A549 (cell line): ENCODE measurements at regions of chr15 and their contacts with region 1.

Region 1: DNA sequence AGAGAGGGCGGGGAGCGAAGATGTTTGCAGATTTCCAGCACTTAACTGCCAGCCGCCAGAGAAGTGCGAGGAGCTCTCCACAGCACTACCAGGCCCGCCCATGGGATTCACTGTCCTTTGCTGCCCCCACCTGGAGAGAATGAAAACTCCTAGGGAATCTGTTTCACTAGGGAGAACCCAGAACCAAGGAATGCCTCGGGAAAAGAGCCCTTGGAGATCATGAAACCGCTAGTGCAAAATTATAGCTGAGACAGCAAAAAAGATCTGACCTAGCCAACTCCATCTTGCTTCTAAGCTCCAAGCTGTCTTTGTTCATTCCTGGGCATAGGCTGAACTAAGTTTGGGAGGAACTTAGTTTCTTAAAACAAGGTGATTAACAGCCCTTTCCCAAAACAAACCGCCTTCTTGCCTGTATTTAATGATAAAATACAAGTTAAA is 82.6 kb upstream of the GCNT3 start:
- DNase-seq: peak; percentile 74 to 93
- ATAC-seq: peak; percentile 95 to 99
- H3K4me3 ChIP-seq: no peak overlapping the region
- H3K27ac ChIP-seq: no peak overlapping the region
- H3K4me1 ChIP-seq: peaks cover 10% of the 10 kb centered on the region; the same call in 1 of the 3 replicates
- CTCF ChIP-seq: peak; percentile 97
- EP300 ChIP-seq: no peak
- POLR2A ChIP-seq: no peak
- RAD21 ChIP-seq: peak; percentile 99

Region 2: DNA sequence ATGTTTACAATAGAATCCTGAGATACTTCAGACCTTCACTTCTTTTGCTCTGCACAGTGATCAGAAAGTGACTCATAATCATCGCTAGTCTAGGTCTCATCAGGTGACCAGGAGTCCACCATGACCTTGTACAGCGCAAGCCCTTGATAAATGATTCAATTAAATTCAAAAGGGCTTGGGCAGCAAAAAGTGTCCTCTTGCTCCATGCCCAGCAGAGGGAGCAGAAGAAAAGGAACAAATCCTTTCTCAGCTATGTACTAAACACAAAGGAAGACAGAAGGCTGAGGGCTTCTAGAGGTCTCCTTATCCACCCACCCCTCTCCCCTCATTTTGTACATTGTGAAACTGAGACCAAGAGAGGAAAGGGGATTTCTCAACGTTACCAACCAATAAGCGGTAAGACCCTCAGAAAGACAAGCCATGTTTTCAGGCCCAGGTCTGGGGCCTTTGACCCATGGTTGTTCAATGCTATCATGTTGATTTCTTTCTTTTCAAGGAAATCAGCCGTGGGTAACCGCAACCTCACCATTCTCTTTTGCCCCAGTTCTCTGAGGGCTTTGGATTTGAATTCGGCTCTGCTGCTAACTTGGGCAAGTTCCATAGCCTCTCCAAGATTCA is 1316.0 kb before region 1 on chr15:
- CTCF ChIA-PET with region 1: interaction called, 19 read pairs
- POLR2A ChIA-PET with region 1: no interaction called
- DNase-seq: peak; percentile 69 to 76
- ATAC-seq: peak; percentile 94 to 97
- H3K4me3 ChIP-seq: no peak overlapping the region
- H3K27ac ChIP-seq: no peak overlapping the region
- H3K4me1 ChIP-seq: no peaks in the 10 kb centered on the region
- CTCF ChIP-seq: peak; percentile 82
- EP300 ChIP-seq: no peak
- POLR2A ChIP-seq: no peak
- RAD21 ChIP-seq: peak; percentile 67 to 71

Region 3: GRCh38 chr15:58957101-58957973 is 571.6 kb before region 1 on chr15:
- CTCF ChIA-PET with region 1: interaction called, 20 read pairs
- POLR2A ChIA-PET with region 1: no interaction called
- DNase-seq: peak; percentile 85 to 88
- ATAC-seq: peak; percentile 97 to 99
- H3K4me3 ChIP-seq: no peak overlapping the region
- H3K27ac ChIP-seq: no peak overlapping the region
- H3K4me1 ChIP-seq: peaks cover 12% of the 10 kb centered on the region; the same call in 2 of the 3 replicates
- CTCF ChIP-seq: peak; percentile 93
- EP300 ChIP-seq: no peak
- POLR2A ChIP-seq: no peak
- RAD21 ChIP-seq: peak; percentile 79 to 82

Region 4: DNA sequence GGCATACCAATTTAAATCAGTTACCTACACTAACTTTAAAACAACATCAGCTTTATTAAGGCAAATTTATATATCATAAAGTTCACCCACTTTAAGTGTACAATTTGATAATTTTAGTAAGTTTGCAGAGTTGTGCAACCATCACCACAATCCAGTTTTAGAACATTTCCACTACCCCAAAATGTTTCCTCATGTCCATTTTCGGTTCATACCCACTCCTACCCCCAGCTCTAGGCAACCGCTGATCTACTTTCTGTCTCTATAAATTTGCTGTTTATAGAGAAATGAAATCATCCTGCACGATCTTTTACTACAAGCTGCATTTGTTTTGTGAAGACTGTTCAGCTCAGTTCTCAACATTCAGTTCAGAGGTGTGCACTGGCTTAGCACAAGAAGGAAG is 122.5 kb before region 1 on chr15:
- CTCF ChIA-PET with region 1: no interaction called
- POLR2A ChIA-PET with region 1: no interaction called
- DNase-seq: no peak
- ATAC-seq: no peak
- H3K4me3 ChIP-seq: no peak overlapping the region
- H3K27ac ChIP-seq: no peak overlapping the region
- H3K4me1 ChIP-seq: peaks cover 27% of the 10 kb centered on the region
- CTCF ChIP-seq: no peak
- EP300 ChIP-seq: no peak
- POLR2A ChIP-seq: no peak
- RAD21 ChIP-seq: no peak

Region 5: GRCh38 chr15:59492389-59493377 is 36.3 kb before region 1 on chr15:
- CTCF ChIA-PET with region 1: interaction called, 18 read pairs
- POLR2A ChIA-PET with region 1: no interaction called
- DNase-seq: peak; percentile 61 to 81
- ATAC-seq: peak; percentile 95 to 98
- H3K4me3 ChIP-seq: no peak overlapping the region
- H3K27ac ChIP-seq: peak overlapping the region; percentile 55 to 71
- H3K4me1 ChIP-seq: peaks cover 9% of the 10 kb centered on the region
- CTCF ChIP-seq: peak; percentile 98
- EP300 ChIP-seq: no peak
- POLR2A ChIP-seq: no peak
- RAD21 ChIP-seq: peak; percentile 100

Region 6: GRCh38 chr15:59543721-59544547 is 14.9 kb after region 1 on chr15:
- CTCF ChIA-PET with region 1: interaction called, 312 read pairs
- POLR2A ChIA-PET with region 1: no interaction called
- DNase-seq: no peak
- ATAC-seq: no peak; a peak in 2 of 6 replicates
- H3K4me3 ChIP-seq: no peak overlapping the region
- H3K27ac ChIP-seq: peak overlapping the region; percentile 10 to 65; a peak in 4 of 6 replicates
- H3K4me1 ChIP-seq: peaks cover 15% of the 10 kb centered on the region
- CTCF ChIP-seq: no peak
- EP300 ChIP-seq: no peak
- POLR2A ChIP-seq: no peak
- RAD21 ChIP-seq: no peak

Region 7: DNA sequence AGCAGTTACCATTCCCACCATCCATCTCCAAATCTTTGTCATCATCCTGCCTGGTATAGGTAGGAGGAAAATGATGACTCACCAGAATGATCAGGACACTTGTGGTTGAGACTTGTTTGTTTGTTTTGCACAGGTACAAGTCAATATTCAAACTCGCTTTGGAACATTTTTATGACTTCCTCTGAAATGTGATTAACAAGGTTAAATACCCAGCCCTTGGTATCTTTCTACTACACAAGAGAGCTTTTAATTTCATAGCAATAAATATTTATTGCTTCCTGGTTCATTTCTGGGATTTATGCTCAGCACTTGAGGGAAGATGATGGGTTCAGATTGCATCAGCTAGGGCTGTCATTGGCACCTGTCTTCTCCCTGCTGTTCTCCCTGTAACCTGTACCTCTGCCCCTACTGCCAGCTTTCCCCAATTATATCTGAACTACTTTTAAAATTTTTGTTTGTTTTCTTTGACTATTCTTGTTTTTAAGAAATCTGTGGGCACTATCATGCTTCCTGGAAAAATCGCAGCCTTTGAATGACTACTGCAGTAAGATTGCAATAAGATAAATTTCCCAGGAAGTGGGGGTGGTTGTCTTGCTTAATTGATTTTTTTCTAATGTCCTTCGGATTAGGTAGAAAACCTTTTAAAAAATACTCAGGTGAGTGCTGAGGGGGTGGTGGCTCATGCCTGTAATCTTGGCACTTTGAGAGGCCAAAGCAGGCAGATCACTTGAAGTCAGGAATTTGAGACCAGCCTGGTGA is 58.3 kb after region 1 on chr15:
- CTCF ChIA-PET with region 1: interaction called, 60 read pairs
- POLR2A ChIA-PET with region 1: no interaction called
- DNase-seq: peak in 1 of 2 experiments; percentile 62
- ATAC-seq: peak in 1 of 2 experiments; percentile 60; a peak in 3 of 6 replicates
- H3K4me3 ChIP-seq: no peak overlapping the region
- H3K27ac ChIP-seq: peak overlapping the region; percentile 57 to 66
- H3K4me1 ChIP-seq: peaks cover 15% of the 10 kb centered on the region
- CTCF ChIP-seq: no peak
- EP300 ChIP-seq: no peak
- POLR2A ChIP-seq: no peak
- RAD21 ChIP-seq: no peak

Region 8: GRCh38 chr15:59611276-59612260 is 82.6 kb after region 1 on chr15 and contains the start of gene GCNT3:
- CTCF ChIA-PET with region 1: interaction called, 154 read pairs
- POLR2A ChIA-PET with region 1: interaction called, 17 read pairs
- DNase-seq: peak; percentile 96 to 97
- ATAC-seq: peak; percentile 93 to 95
- H3K4me3 ChIP-seq: peak within 1 kb of the TSS; percentile 65
- H3K27ac ChIP-seq: peak within 1 kb of the TSS; percentile 95 to 96
- H3K4me1 ChIP-seq: peaks cover 39% of the 10 kb centered on the region
- CTCF ChIP-seq: no peak
- EP300 ChIP-seq: peak in 1 of 2 experiments; percentile 45; a peak in 1 of 5 replicates
- POLR2A ChIP-seq: peak; percentile 30
- RAD21 ChIP-seq: 0 out of 5 replicates have a peak, but pooled peaks of 1 of the 2 experiments have one; percentile 20
- polyA plus RNA-seq, gene GCNT3: 134 and 153 TPM in 2 replicates